Brain microvascular endothelial cell (primary cell): ENCODE measurements at regions of chr9 and their contacts with region 1.

Region 1: GRCh38 chr9:27514551-27514950 is 9.5 kb upstream of the IFNK start:
- DNase-seq: no peak
- H3K4me3 ChIP-seq: no peak overlapping the region
- H3K27ac ChIP-seq: no peak overlapping the region
- H3K27me3 ChIP-seq: no peaks in the 10 kb centered on the region
- CTCF ChIP-seq: no peak

Region 2: DNA sequence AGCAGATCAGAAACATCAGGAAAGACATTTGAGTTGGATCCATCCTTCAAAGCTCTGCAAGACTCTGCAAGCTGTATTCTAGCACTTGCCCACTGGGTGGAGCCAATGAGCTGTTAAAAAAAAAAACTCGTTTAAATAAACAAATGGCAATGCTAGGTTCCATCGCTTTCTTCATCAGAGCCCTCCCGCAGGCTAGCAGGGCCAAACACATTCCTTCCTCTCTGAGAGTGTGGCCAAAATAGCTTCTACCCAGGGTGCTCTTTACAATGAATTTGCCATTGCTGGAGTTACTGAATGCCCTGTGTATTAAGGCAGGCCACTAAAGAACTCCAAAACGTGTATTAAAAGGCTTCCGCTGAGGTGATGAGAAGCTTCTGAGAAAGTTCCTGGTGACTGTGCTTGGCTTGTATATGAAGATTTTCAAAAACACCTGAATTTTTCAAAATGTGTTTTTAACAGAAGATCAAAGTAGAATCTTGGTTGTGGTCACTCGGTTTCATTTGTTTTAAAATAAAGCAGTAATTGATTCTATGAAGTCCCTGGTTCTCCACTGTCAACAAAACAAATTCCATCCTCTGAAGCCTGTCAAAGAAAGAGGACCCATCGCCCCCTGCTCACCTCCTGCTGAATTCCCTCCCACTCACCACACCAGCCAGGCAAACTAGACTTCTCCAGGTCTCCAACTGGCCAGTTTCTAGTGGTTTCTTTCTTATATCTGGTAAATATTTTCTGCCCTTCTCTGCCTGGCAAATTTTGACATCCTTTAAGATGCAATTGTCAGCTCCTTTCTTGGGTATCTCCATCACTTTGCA is 181.1 kb before region 1 on chr9:
- in situ Hi-C with region 1: loop called (anchors 25 kb)
- DNase-seq: peak; percentile 63
- H3K4me3 ChIP-seq: no peak overlapping the region
- H3K27ac ChIP-seq: no peak overlapping the region
- H3K27me3 ChIP-seq: no peaks in the 10 kb centered on the region
- CTCF ChIP-seq: peak; percentile 86

Region 3: GRCh38 chr9:27407986-27408385 is 106.6 kb before region 1 on chr9:
- in situ Hi-C with region 1: no loop called
- DNase-seq: peak; percentile 77
- H3K4me3 ChIP-seq: no peak overlapping the region
- H3K27ac ChIP-seq: peak overlapping the region; percentile 73
- H3K27me3 ChIP-seq: no peaks in the 10 kb centered on the region
- CTCF ChIP-seq: no peak